PC-3 (cell line): ENCODE measurements at regions of chr14 and their contacts with region 1.

Region 1: GRCh38 chr14:76876076-76876475 is 49.9 kb downstream of the LRRC74A start:
- DNase-seq: peak; percentile 87
- ATAC-seq: peak; percentile 96
- H3K4me3 ChIP-seq: no peak overlapping the region
- H3K27ac ChIP-seq: no peak overlapping the region
- H3K4me1 ChIP-seq: no peaks in the 10 kb centered on the region
- H3K27me3 ChIP-seq: no peaks in the 10 kb centered on the region
- CTCF ChIP-seq: peak; percentile 96

Region 2: DNA sequence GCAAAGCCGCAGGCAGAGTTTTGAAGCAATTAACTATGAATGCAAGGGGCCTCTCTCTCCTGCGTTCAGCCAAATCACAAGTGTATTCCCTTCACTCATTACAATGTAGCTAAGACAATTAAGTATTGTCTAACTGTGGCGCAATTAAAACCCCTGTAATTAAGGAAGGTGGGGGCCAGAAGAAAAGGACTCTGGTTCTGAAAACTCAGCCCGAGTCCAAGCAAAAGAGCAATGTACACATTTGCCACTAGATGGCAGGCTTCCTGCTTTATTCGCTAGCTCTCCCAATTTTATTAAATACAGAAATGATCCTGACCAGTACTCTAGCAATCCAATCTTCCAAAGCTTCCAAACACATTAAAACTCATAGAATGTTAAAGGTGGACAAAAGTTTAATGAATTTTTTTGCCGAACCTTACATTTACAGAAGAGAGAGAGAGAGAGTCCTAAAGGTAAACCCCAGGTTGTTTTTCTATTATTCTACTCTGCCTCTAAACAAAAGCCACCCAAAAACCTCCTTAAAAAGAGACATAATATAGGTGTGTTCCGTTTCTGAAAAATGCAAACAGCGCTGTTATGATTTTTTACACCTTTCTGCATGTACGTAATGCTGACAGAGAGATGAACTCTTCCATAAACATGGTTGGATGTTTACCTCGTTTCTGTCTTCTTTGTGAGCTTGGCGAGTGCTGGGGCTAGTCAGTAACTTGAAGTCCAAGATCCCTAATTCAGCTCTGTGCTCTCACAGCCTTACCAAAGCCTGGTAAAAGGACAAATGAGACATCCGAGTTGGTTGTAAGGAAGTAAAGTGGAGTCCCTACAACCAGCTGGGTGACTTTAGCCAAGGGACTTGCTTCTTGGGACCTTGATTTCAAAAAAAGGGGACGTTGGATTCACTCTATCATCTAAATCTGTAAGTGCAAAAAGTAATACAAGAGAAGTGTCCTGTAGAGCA is 165.7 kb before region 1 on chr14:
- CTCF ChIA-PET with region 1: interaction called, 3 read pairs
- POLR2A ChIA-PET with region 1: no interaction called
- intact Hi-C with region 1: loop called (anchors 5 kb)
- DNase-seq: peak; percentile 69
- ATAC-seq: peak; percentile 69
- H3K4me3 ChIP-seq: no peak overlapping the region
- H3K27ac ChIP-seq: no peak overlapping the region
- H3K4me1 ChIP-seq: no peaks in the 10 kb centered on the region
- H3K27me3 ChIP-seq: peaks cover 36% of the 10 kb centered on the region
- CTCF ChIP-seq: peak; percentile 90

Region 3: DNA sequence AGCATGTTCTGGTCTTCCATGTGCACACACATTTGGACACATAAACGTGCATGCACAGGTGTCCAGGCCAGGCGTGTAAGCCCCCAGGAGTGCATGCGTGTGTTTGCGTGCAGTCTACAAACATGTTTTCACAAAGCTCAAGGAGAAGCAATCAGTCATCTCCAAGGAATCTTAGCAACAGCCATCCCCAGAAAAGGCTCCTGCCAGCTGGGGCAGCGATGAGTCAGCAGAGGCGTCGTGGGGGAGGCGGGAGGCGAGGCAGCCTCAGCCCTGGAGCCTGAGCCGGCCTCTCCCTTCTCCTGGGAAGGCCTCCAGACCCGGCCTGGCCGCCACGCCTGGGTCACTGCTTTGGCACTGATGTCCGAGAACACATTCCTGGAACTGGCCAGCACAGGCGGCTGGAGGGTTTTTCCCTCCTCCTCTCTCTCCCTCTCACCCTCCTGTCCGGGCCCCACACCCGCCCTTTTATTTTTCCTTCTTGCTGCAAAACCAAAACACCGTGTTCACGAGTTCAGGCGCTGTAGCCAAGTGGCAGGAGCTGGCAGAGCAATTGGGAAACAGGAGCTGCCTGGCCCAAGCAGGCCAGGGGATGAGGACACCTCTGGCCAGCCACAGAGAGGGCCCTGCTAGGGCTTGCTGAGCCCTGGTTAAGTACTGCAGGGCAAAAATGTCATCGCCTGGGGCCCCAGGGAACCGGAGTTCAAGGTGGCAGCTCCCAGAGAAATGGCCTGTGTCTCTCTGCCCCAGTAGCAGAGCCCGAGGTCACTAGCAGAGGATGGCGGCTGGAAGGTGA is 42.9 kb after region 1 on chr14:
- CTCF ChIA-PET with region 1: interaction called, 3 read pairs
- POLR2A ChIA-PET with region 1: no interaction called
- intact Hi-C with region 1: loop called (anchors 2 kb)
- DNase-seq: peak; percentile 96
- ATAC-seq: peak; percentile 73
- H3K4me3 ChIP-seq: peak overlapping the region; percentile 28; the same call in 1 of the 2 replicates
- H3K27ac ChIP-seq: peak overlapping the region; percentile 97
- H3K4me1 ChIP-seq: peaks cover 60% of the 10 kb centered on the region
- H3K27me3 ChIP-seq: no peaks in the 10 kb centered on the region
- CTCF ChIP-seq: 0 out of 2 replicates have a peak, but pooled peaks have one; percentile 8

Region 4: DNA sequence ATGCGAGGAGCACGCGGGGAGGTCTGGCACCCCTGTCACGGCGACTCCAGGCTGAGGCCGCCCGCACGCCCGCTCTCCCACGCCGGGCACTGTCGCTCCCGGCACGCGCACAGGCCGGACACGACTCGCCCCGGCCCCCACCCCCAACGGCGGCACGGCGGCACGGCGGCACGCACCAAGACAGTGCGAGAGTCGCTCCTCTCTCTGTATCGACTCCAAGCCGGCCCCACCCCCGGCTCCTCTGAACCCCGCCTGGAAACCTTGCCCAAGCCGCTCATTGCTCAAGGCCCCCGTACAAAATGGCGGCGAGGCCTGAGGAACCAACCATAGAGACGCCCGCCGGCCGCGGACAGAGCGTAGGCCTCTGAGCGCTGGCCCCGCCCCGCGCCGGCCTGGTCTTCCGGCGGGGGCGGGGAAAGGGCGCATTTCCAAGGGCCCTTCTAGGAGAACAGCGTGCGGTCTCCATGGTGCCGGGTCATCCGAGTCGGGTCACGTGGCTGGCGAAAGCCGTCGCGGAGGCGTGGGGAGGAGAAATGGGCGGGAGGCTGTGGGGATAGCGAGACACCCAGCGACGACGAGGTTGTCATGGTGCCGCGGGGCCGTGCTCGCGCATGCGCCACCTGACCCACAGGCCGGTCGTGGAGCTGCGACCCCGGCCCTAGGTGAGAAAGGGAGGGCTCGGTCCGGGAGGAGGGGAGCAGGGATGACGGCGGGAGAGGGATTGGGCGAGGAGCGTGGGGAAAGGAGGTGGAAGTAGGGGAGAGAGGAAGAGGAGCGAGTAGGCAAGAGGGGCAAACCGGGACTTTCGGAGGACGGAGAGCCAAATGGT is 221.8 kb after region 1 on chr14 and contains the start of gene CIPC:
- CTCF ChIA-PET with region 1: interaction called, 6 read pairs
- POLR2A ChIA-PET with region 1: no interaction called
- intact Hi-C with region 1: loop called (anchors 1 kb)
- DNase-seq: peak; percentile 100
- ATAC-seq: peak; percentile 87
- H3K4me3 ChIP-seq: peak within 1 kb of the TSS; percentile 88
- H3K27ac ChIP-seq: peak within 1 kb of the TSS; percentile 86
- H3K4me1 ChIP-seq: peaks cover 27% of the 10 kb centered on the region
- H3K27me3 ChIP-seq: no peaks in the 10 kb centered on the region
- CTCF ChIP-seq: no peak
- total RNA-seq, gene CIPC: 26.0 and 26.6 TPM in 2 replicates

Region 5: GRCh38 chr14:77151918-77152588 is 276.0 kb after region 1 on chr14:
- CTCF ChIA-PET with region 1: interaction called, 11 read pairs
- POLR2A ChIA-PET with region 1: no interaction called
- intact Hi-C with region 1: loop called (anchors 1 kb)
- DNase-seq: peak; percentile 82
- ATAC-seq: peak; percentile 79
- H3K4me3 ChIP-seq: no peak overlapping the region
- H3K27ac ChIP-seq: no peak overlapping the region
- H3K4me1 ChIP-seq: no peaks in the 10 kb centered on the region
- H3K27me3 ChIP-seq: peaks cover 8% of the 10 kb centered on the region
- CTCF ChIP-seq: peak; percentile 61

Region 6: DNA sequence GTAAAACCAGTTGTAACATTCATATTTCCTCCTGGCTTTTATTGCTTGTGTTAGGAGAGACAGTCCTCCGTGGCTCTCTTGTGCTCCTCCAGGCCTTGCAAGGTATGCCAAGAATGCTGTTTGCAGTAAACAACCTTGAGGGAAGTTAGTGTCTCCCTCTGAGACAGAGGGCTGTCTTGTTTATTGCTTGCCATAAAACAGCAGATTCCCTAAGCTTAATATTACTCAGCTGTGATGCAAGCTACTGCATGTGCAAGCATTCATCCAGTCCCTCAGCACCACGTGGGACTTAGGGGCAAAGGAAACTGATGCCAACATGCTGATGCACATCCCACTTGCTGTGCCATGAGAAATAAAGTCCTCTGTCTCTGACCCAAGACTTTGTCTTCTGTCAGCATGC is 438.0 kb after region 1 on chr14:
- CTCF ChIA-PET with region 1: no interaction called
- POLR2A ChIA-PET with region 1: no interaction called
- intact Hi-C with region 1: loop called (anchors 10 kb)
- DNase-seq: peak; percentile 92
- ATAC-seq: peak; percentile 87
- H3K4me3 ChIP-seq: no peak overlapping the region
- H3K27ac ChIP-seq: peak overlapping the region; percentile 73
- H3K4me1 ChIP-seq: peaks cover 46% of the 10 kb centered on the region
- H3K27me3 ChIP-seq: no peaks in the 10 kb centered on the region
- CTCF ChIP-seq: peak; percentile 21; the same call in 1 of the 2 replicates

Region 7: GRCh38 chr14:77554207-77554606 is 678.1 kb after region 1 on chr14:
- CTCF ChIA-PET with region 1: no interaction called
- POLR2A ChIA-PET with region 1: no interaction called
- intact Hi-C with region 1: loop called (anchors 10 kb)
- DNase-seq: no peak
- ATAC-seq: no peak
- H3K4me3 ChIP-seq: no peak overlapping the region
- H3K27ac ChIP-seq: no peak overlapping the region
- H3K4me1 ChIP-seq: no peaks in the 10 kb centered on the region
- H3K27me3 ChIP-seq: no peaks in the 10 kb centered on the region
- CTCF ChIP-seq: no peak